ENCODE measurements at regions of chr6 and their contacts with region 1.

Region 1: DNA sequence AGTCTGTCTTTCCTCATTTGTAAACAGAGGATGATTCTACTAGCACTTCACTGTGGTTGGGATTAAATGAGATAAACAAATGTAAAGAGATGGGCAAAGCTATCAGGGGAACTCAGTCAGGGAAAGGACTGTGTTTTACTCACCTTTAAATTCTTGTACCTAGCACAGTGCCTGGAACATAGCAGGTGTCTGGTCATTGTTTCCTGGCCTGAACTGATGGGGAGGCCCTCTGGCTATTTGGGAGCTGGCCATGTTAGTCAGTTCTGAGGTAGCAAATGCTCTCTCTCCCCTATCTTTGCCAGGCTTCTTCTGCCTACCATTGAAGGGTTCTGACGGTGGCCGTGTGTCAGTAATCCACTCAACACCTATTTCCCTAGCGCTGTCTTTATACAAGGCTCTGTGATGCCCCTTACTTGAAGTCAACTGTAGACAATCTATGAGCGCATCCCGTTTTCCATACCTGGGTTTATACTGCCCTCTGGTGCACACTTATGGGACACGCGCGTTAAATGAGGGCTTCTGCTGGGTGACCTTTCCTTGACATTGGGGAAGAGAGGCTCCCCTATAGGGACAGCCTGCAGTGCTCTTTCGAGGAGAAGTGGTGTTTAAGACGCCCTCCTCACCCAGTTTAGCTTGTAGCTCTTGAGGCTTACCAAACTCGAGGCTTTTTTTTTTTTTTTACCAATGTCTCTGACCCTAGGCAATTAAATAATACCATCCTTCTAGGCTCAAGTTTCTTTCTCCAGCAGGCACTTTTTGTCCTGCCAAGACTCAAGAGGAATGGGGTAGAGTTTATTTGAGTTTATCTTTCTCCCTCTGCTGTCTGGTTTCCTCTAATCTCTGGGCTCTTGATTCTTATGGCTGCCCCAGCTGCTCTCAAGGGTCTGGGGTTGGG is 4.0 kb upstream of the SPATS1 start:
- DNase-seq: no peak

Region 2: GRCh38 chr6:44096612-44097011 is 241.9 kb before region 1 on chr6:
- intact Hi-C with region 1: loop called (anchors 5 kb)
- DNase-seq: no peak

Region 3: DNA sequence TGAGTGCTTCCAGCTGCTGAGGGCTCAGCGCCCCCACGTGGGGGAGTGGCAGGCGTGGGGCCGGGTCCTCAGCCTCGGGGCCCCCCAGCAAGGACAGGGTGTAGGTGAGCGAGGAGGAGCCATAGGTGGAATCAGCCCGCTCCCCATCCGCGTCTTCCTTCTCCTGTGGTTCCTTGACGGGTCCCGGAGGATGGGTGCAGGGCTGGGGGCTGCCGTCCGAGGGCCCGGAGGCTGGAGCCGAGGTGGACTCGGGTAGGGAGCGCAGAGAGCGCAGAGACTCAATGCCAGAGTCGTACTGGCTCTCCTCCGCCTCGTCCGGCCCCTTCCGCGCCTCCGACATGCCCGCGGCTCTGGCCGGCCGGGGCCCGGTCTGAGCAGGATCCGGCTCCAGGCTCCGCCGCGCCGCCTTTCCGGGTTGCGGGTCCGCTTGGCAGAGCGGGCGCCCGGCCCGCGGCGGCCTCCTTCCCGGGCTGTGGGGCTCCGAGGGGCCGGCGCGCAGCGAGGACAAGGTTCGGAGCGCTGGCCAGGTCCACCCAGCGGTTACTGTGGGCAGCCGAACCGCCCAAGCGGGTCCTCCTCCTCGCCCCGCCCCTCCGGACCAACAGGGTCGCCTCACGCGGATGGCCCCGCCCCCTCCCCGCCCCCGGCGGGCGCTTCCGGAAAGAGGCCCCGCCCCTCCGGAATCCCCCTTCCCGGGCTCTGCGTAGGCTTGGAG is 73.3 kb before region 1 on chr6 and contains the start of gene NFKBIE:
- intact Hi-C with region 1: loop called (anchors 2 kb)
- DNase-seq: peak; percentile 97
- total RNA-seq, gene NFKBIE: 4.7 TPM